PC-3 (cell line): ENCODE measurements at regions of chr4 and their contacts with region 1.

Region 1: DNA sequence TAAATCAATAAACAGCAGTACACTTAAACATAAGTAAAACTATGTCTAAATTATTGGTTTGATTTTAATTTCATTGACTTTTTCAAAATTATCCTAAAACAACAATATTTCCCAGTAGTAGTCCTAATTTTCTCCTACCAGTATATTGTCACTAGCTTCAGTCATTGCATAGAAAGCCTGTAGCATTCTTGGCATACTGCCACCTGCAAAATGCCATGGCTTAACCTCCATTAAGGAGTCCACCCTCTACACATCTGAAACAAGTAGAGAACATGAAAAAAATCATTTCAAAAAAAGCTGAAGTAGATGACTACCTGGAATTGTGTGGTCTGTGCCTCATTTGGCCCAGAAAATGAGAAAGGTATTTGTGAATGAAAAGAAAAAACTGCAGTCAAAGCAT is 348.5 kb downstream of the INPP4B start:
- DNase-seq: no peak
- ATAC-seq: no peak
- H3K4me3 ChIP-seq: no peak overlapping the region
- H3K27ac ChIP-seq: no peak overlapping the region
- H3K4me1 ChIP-seq: peaks cover 16% of the 10 kb centered on the region
- H3K27me3 ChIP-seq: no peaks in the 10 kb centered on the region
- CTCF ChIP-seq: no peak

Region 2: GRCh38 chr4:142211424-142211823 is 286.2 kb before region 1 on chr4:
- CTCF ChIA-PET with region 1: interaction called, 11 read pairs
- POLR2A ChIA-PET with region 1: no interaction called
- intact Hi-C with region 1: no loop called
- DNase-seq: peak; percentile 16
- ATAC-seq: peak; percentile 46; the same call in 1 of the 2 replicates
- H3K4me3 ChIP-seq: no peak overlapping the region
- H3K27ac ChIP-seq: no peak overlapping the region
- H3K4me1 ChIP-seq: no peaks in the 10 kb centered on the region
- H3K27me3 ChIP-seq: no peaks in the 10 kb centered on the region
- CTCF ChIP-seq: peak; percentile 49

Region 3: DNA sequence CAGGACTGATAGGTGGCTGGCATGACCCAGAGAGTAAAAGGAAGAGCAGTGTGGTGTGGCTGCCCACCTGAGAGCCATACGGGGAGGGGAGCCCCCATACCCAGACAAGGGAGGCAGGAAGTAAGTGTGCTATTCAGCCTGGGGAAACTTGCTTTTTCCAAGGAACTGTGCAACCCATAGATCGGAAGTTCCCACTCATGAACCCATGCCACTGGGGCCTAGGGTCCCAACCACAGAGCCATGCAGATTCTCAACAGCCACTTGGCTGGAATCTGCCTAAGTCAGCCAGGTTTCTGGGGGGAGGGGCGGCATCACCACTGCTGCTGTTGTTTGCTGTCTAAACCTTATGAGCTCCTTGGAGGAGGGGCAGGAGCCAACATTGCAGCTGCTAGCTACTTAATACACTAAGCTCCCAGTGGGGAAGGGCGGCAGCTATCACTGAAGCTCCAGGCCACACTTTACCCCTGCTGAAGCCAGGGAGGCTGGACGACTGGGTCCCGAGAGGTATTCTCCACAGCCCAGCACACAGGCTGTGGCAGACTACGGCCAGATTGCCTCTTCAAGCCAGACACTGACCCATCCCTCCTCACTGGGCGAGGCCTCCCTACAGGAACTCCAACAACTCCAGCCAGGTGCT is 61.9 kb before region 1 on chr4:
- CTCF ChIA-PET with region 1: no interaction called
- POLR2A ChIA-PET with region 1: no interaction called
- intact Hi-C with region 1: no loop called
- DNase-seq: no peak
- ATAC-seq: no peak
- H3K4me3 ChIP-seq: no peak overlapping the region
- H3K27ac ChIP-seq: no peak overlapping the region
- H3K4me1 ChIP-seq: peaks cover 5% of the 10 kb centered on the region
- H3K27me3 ChIP-seq: no peaks in the 10 kb centered on the region
- CTCF ChIP-seq: no peak